ENCODE measurements at regions of chr19 and their contacts with region 1.

Region 1: DNA sequence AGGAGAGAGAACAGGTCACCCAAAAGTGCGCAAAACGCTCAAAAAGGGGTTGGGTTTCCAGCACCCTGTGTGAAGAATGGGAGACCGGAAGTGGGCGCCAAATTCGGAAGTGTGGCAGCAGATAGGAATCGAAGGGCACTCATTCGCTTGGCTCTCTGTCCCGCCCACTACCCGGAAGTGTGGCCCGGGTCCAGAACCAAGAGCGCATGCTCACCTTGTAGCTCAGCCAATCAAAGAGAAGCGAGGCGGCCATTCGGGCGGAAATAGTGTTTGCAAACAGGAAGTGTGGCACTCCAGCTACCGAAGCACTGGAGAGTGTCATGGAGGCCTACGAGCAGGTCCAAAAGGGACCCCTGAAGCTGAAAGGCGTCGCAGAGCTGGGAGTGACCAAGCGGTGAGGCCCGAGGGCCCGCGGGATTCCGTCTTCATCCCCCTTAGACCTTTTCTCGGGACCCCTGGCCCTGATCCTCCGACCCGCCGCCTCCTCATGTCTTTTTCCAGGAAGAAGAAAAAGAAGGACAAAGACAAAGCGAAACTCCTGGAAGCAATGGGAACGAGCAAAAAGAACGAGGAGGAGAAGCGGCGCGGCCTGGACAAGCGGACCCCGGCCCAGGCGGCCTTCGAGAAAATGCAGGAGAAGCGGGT is at the start of gene FAM32A:
- DNase-seq: peak; percentile 100
- H3K4me3 ChIP-seq: peak within 1 kb of the TSS; percentile 60
- CTCF ChIP-seq: no peak
- POLR2A ChIP-seq: no peak
- total RNA-seq, gene FAM32A: 95.3 to 114 (median 105) TPM

Region 2: GRCh38 chr19:16041299-16041990 is 143.8 kb before region 1 on chr19:
- intact Hi-C with region 1: loop called (anchors 5 kb)
- DNase-seq: peak; percentile 76 to 97
- H3K4me3 ChIP-seq: no peak overlapping the region
- CTCF ChIP-seq: peak in 1 of 3 donors; percentile 86
- POLR2A ChIP-seq: no peak

Region 3: DNA sequence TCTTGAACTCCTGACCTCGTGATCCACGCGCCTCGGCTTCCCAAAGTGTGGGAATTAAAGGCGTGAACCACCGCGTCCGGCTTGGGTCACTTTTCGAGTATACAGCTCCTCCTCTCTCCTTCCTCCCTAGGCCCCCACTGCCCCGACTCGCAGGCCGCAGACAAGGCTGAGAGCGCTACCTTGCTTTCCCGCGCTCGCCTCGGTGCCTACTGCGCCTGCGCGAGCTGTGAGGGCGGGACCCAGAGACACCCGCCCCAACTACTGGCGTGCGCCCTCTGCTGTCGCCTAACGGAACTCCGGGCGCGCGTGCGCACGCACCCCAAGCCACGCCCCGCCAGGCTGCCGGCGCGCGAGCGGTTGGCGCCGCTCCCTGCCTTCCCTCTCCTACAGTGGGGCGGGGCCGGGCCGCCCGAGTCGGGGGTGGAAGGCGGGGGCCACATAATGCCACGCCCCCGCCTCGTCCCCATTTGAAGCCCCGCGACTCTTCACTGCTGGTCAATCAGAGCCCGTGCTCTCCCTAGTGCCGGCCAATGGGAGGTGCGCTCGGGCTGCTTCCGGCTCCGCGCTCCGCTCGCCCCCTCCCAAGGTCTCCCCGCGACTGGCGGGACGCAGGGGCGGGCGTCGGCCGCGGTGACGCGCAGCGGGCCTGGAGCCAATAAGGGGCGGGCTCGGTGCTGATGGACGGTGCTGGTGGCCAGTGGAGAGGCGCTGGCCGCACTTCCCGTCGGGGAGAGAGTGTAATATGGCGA is 73.9 kb before region 1 on chr19 and contains the start of gene RAB8A:
- intact Hi-C with region 1: loop called (anchors 10 kb)
- DNase-seq: peak; percentile 98 to 100
- H3K4me3 ChIP-seq: peak within 1 kb of the TSS; percentile 99
- CTCF ChIP-seq: peak in 1 of 3 donors; percentile 95
- POLR2A ChIP-seq: no peak
- total RNA-seq, gene RAB8A: 43.3 to 58.2 (median 50.8) TPM

Measured in lower leg skin (tissue), 4 donors.